Ovary (tissue), 10 donors: ENCODE measurements at regions of chr7 and their contacts with region 1.

Region 1: GRCh38 chr7:28389504-28390395 is 22.6 kb upstream of the CREB5 start:
- DNase-seq: no peak
- H3K4me3 ChIP-seq: peak overlapping the region; percentile 2
- H3K27ac ChIP-seq: no peak overlapping the region
- H3K4me1 ChIP-seq: no peaks in the 10 kb centered on the region
- H3K27me3 ChIP-seq: no peaks in the 10 kb centered on the region
- CTCF ChIP-seq: peak in 2 of 3 donors; percentile 44 to 47
- EP300 ChIP-seq: no peak
- POLR2A ChIP-seq: no peak

Region 2: DNA sequence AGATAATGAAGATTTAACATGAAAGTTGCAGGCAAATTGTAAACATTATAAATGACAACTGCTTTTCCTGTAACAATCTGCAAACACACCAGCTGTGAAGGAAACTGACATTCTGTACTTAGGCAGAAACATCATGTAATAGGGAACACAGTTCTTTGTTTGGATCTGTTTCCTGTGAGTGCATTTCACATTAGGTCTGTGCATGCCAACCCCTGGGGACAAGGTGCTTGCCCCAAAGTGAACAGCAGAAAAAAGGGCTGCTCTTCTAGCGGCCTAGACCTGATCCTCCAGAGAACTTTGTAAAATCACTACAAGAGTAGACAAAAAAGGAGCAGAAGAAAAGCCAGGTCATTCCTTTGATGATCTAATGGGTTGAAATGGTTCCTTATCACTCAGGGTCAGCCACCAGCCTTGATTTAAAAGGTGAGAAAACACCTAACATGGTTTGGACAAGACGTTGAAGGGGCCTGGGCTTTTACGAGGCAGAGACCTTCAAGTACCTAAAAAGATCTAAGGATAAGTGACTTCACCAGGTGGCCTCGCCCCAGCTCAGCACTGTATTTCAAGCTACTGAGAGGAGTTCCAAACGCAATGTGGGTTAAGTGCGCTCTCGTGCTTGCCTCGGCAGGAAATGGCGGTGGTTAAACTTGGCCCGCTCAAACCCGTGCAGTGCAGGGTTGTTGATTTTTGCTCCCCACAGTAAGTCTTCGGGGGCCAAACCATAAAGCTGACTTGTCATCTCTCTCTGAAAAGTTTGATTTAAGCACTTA is 272.3 kb after region 1 on chr7:
- intact Hi-C with region 1: no loop called
- DNase-seq: no peak
- H3K4me3 ChIP-seq: no peak overlapping the region
- H3K27ac ChIP-seq: no peak overlapping the region
- H3K4me1 ChIP-seq: no peaks in the 10 kb centered on the region
- H3K27me3 ChIP-seq: no peaks in the 10 kb centered on the region
- CTCF ChIP-seq: no peak
- EP300 ChIP-seq: no peak
- POLR2A ChIP-seq: no peak

Region 3: GRCh38 chr7:28862595-28863272 is 473.0 kb after region 1 on chr7:
- intact Hi-C with region 1: loop called in 1 of 4 experiments (anchors 5 kb)
- DNase-seq: no peak
- H3K4me3 ChIP-seq: no peak overlapping the region
- H3K27ac ChIP-seq: no peak overlapping the region
- H3K4me1 ChIP-seq: no peaks in the 10 kb centered on the region
- H3K27me3 ChIP-seq: no peaks in the 10 kb centered on the region
- CTCF ChIP-seq: no peak
- EP300 ChIP-seq: no peak
- POLR2A ChIP-seq: no peak